Naive thymus-derived CD4-positive, alpha-beta T cell (primary cell): ENCODE measurements at regions of chr20 and their contacts with region 1.

Region 1: GRCh38 chr20:50790651-50791277 is 4.1 kb upstream of the BCAS4 start:
- DNase-seq: peak; percentile 62 to 80 (median 77)
- ATAC-seq: peak; percentile 68
- H3K4me3 ChIP-seq: peak overlapping the region; percentile 40
- H3K4me3 Mint-ChIP-seq: peak overlapping the region in 4 of 10 donors; percentile 27 to 63 (median 39)
- H3K27ac ChIP-seq: peak overlapping the region; percentile 69
- H3K27ac Mint-ChIP-seq: peak overlapping the region in 8 of 9 donors; percentile 63 to 86 (median 78)
- H3K4me1 ChIP-seq: peaks cover 11 to 16% of the 10 kb centered on the region in 2 donors
- H3K4me1 Mint-ChIP-seq: peaks cover 0 to 28% (median 15%) of the 10 kb centered on the region in 7 donors
- H3K27me3 ChIP-seq: no peaks in the 10 kb centered on the region
- H3K27me3 Mint-ChIP-seq: no peaks in the 10 kb centered on the region

Region 2: GRCh38 chr20:50731055-50731871 is 59.5 kb before region 1 on chr20 and contains the start of gene PARD6B:
- CTCF ChIA-PET with region 1: interaction called, 3 read pairs
- POLR2A ChIA-PET with region 1: interaction called, 5 read pairs
- intact Hi-C with region 1: loop called (anchors 1 kb)
- DNase-seq: peak; percentile 94 to 100 (median 100)
- ATAC-seq: peak; percentile 97
- H3K4me3 ChIP-seq: peak within 1 kb of the TSS; percentile 80
- H3K4me3 Mint-ChIP-seq: peak within 1 kb of the TSS; percentile 79 to 94 (median 88)
- H3K27ac ChIP-seq: peak within 1 kb of the TSS; percentile 80
- H3K27ac Mint-ChIP-seq: peak within 1 kb of the TSS; percentile 75 to 95 (median 83)
- H3K4me1 ChIP-seq: peaks cover 9 to 14% of the 10 kb centered on the region in 2 donors
- H3K4me1 Mint-ChIP-seq: peaks cover 22 to 45% (median 34%) of the 10 kb centered on the region in 7 donors
- H3K27me3 ChIP-seq: no peaks in the 10 kb centered on the region
- H3K27me3 Mint-ChIP-seq: peaks cover 0 to 3% (median 0%) of the 10 kb centered on the region in 5 donors
- total RNA-seq, gene PARD6B: 5.2 to 10.8 (median 7.7) TPM

Region 3: DNA sequence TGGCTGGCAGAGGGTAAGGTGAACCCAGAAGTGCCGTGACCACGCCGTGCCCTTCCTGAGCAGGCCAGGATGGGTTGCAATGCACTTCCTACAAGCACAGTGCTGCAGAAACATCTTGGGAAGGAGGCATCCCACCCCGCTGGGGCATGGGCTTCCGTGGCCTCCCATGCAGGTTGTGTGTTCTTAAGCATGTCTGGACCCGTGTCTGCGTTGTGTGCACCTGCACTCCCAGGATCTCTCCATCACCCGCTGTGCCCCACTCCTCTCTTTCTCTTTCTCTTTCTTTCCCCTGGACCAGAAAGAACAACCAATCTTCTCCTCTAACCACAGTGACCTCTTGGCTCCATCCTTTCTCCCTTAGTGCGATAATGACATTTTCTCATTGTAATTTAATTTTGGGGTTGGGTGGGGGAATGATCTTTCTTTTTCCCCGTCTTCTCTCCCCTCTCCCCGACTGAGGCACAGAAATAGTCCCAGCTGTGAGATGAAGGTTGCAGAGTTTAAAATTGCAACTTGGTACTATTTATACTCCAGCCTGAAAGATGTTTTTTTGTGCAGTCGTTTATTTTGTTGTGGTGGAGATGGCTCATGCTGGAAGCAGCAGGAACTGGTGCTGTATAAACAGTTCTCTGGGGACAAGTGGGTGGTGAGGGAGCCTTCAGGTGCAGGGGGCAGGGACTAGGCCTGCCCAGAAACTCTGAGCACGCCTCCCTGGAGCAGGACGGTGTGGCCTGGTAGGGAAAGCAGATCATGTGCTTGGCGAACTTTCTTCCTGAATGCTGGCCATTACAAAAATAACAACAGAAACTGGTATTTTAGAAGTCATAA is 24.6 kb after region 1 on chr20:
- CTCF ChIA-PET with region 1: interaction called, 41 read pairs
- POLR2A ChIA-PET with region 1: interaction called, 53 read pairs
- intact Hi-C with region 1: loop called (anchors 1 to 2 kb)
- DNase-seq: peak in 1 of 9 donors; percentile 6
- ATAC-seq: peak; percentile 24
- H3K4me3 ChIP-seq: peak overlapping the region; percentile 25
- H3K4me3 Mint-ChIP-seq: peak overlapping the region; percentile 60 to 93 (median 80)
- H3K27ac ChIP-seq: peak overlapping the region; percentile 43
- H3K27ac Mint-ChIP-seq: peak overlapping the region; percentile 75 to 98 (median 87)
- H3K4me1 ChIP-seq: peaks cover 11 to 37% of the 10 kb centered on the region in 2 donors
- H3K4me1 Mint-ChIP-seq: peaks cover 34 to 70% (median 52%) of the 10 kb centered on the region in 7 donors
- H3K27me3 ChIP-seq: no peaks in the 10 kb centered on the region
- H3K27me3 Mint-ChIP-seq: no peaks in the 10 kb centered on the region

Region 4: GRCh38 chr20:50844430-50845100 is 53.8 kb after region 1 on chr20:
- CTCF ChIA-PET with region 1: interaction called, 4 read pairs
- POLR2A ChIA-PET with region 1: interaction called, 3 read pairs
- intact Hi-C with region 1: loop called in 1 of 2 experiments (anchors 10 kb)
- DNase-seq: peak in 1 of 9 donors; percentile 40
- ATAC-seq: peak; percentile 41
- H3K4me3 ChIP-seq: no peak overlapping the region
- H3K4me3 Mint-ChIP-seq: peak overlapping the region in 1 of 10 donors; percentile 20
- H3K27ac ChIP-seq: no peak overlapping the region
- H3K27ac Mint-ChIP-seq: peak overlapping the region in 1 of 9 donors; percentile 78
- H3K4me1 ChIP-seq: peaks cover 0 to 9% of the 10 kb centered on the region in 2 donors
- H3K4me1 Mint-ChIP-seq: peaks cover 0 to 16% (median 6%) of the 10 kb centered on the region in 7 donors
- H3K27me3 ChIP-seq: no peaks in the 10 kb centered on the region
- H3K27me3 Mint-ChIP-seq: no peaks in the 10 kb centered on the region

Region 5: GRCh38 chr20:50958615-50959542 is 168.1 kb after region 1 on chr20 and contains the start of gene MOCS3:
- CTCF ChIA-PET with region 1: interaction called, 11 read pairs
- POLR2A ChIA-PET with region 1: interaction called, 29 read pairs
- intact Hi-C with region 1: loop called (anchors 1 kb)
- DNase-seq: peak; percentile 57 to 95 (median 91)
- ATAC-seq: peak; percentile 86
- H3K4me3 ChIP-seq: peak within 1 kb of the TSS; percentile 93
- H3K4me3 Mint-ChIP-seq: peak within 1 kb of the TSS; percentile 92 to 99 (median 98)
- H3K27ac ChIP-seq: peak within 1 kb of the TSS; percentile 93
- H3K27ac Mint-ChIP-seq: peak within 1 kb of the TSS; percentile 97 to 100 (median 100)
- H3K4me1 ChIP-seq: peaks cover 22 to 25% of the 10 kb centered on the region in 2 donors
- H3K4me1 Mint-ChIP-seq: peaks cover 25 to 78% (median 66%) of the 10 kb centered on the region in 7 donors
- H3K27me3 ChIP-seq: no peaks in the 10 kb centered on the region
- H3K27me3 Mint-ChIP-seq: peaks cover 0 to 2% (median 0%) of the 10 kb centered on the region in 5 donors
- total RNA-seq, gene MOCS3: 2.5 to 8.9 (median 5.2) TPM

Region 6: DNA sequence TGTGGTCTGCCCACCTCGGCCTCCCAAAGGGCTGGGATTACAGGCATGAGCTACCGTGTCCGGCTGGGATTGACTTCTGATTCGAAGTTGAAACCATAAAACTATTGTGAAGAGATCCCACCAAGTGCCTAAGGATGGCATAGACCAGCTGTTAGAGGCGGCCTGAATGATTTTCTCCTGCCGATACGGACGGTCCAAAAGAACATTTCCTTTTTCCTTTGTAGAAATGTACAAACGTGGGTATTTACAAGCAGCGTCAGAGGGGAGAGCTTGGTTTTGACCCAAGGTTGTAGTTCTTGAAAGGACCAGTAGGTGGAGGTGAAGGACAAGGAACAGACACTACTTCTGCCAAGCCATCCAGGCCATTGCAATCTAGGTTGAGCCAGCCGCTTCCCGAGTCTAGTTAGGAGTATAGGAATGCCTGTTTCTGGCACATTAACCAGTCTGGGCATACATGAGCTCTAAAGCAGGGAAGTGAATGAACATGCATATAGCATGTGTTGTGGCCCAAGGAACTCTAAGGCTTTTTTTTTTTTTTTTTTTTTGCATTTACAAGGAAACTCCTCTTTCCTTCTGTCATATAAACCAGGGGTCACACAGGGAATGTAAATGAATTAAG is 196.9 kb after region 1 on chr20:
- CTCF ChIA-PET with region 1: interaction called, 6 read pairs
- POLR2A ChIA-PET with region 1: interaction called, 3 read pairs
- intact Hi-C with region 1: loop called in 1 of 2 experiments (anchors 2 kb)
- DNase-seq: peak; percentile 23 to 77 (median 66)
- ATAC-seq: peak; percentile 92
- H3K4me3 ChIP-seq: no peak overlapping the region
- H3K4me3 Mint-ChIP-seq: no peak overlapping the region
- H3K27ac ChIP-seq: no peak overlapping the region
- H3K27ac Mint-ChIP-seq: peak overlapping the region in 1 of 9 donors; percentile 43
- H3K4me1 ChIP-seq: no peaks in the 10 kb centered on the region
- H3K4me1 Mint-ChIP-seq: peaks cover 0 to 6% (median 0%) of the 10 kb centered on the region in 7 donors
- H3K27me3 ChIP-seq: peaks cover 0 to 3% of the 10 kb centered on the region in 2 donors
- H3K27me3 Mint-ChIP-seq: peaks cover 18 to 31% (median 25%) of the 10 kb centered on the region in 5 donors

Region 7: DNA sequence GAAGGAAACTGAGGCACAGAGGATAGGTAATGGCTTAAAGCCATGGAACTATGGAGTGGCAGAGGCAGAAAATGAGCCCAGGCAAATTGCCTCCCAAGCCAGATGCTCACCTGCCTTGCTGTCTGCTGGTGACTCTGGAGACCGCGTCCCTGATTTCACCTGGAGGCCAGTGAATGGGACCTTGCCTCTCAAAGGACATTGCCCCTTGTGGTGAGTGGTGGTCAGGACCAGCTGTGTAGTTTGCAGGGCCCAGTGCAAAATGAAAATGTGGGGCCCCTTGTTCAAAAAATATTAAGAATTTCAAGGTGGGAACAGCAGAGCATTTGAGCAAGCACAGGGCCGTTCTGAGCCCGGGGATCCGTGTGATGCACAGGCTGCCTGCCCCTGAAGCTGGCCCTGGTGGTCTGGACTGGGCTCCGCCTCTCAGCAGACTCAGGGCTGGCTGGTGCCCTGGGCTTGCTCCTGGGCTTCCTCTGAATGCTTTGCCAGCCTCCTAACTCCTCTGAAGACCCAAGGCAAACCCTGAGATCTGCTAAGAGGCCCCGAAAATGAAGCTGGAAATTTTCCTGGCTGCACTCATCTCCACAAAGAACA is 252.0 kb after region 1 on chr20:
- CTCF ChIA-PET with region 1: no interaction called
- POLR2A ChIA-PET with region 1: no interaction called
- intact Hi-C with region 1: no loop called
- DNase-seq: no peak
- ATAC-seq: no peak
- H3K4me3 ChIP-seq: no peak overlapping the region
- H3K4me3 Mint-ChIP-seq: no peak overlapping the region
- H3K27ac ChIP-seq: no peak overlapping the region
- H3K27ac Mint-ChIP-seq: no peak overlapping the region
- H3K4me1 ChIP-seq: no peaks in the 10 kb centered on the region
- H3K4me1 Mint-ChIP-seq: no peaks in the 10 kb centered on the region
- H3K27me3 ChIP-seq: no peaks in the 10 kb centered on the region
- H3K27me3 Mint-ChIP-seq: peaks cover 0 to 13% (median 10%) of the 10 kb centered on the region in 5 donors